CD8-positive, alpha-beta T cell (primary cell): ENCODE measurements at regions of chr5 and their contacts with region 1.

Region 1: DNA sequence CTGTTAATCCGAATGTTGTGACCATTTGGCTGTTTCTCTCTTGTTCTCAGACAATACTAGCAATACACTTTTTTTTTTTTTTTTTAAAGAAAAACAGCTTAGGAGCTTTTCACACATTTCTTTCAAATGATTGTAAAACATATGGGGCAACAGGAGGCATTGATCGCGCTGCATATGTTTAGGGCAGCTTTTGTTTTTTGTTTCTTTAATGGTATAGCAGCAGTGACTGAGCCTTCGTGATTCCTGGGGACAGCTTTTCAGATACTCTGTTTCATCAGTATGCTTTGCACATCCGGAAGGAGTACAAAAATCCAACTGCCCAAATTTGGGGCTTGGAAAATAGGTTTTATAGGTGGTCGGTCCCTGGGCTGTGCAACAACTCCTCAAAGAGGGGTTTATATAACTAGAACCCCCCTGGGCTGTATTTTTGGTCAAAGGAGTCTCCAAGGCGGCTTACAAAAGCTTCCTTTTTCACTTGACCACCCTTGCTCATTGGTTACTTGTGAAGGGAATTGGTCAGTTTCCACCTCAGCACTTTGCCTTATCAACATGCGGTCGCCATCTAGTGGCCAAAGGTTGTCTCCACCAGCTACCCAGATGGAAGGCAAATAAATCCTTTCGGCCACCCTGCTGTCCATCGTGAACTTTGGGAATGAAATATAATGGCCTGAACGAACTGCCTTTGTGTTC is 91.8 kb downstream of the PDE6A start:
- DNase-seq: peak in 7 of 9 experiments; percentile 13 to 57 (median 46)
- ATAC-seq: no peak
- H3K4me3 ChIP-seq: no peak overlapping the region
- H3K4me3 Mint-ChIP-seq: no peak overlapping the region
- H3K27ac ChIP-seq: no peak overlapping the region
- H3K27ac Mint-ChIP-seq: no peak overlapping the region
- H3K4me1 ChIP-seq: no peaks in the 10 kb centered on the region
- H3K4me1 Mint-ChIP-seq: no peaks in the 10 kb centered on the region
- H3K27me3 ChIP-seq: no peaks in the 10 kb centered on the region
- H3K27me3 Mint-ChIP-seq: no peaks in the 10 kb centered on the region
- CTCF ChIP-seq: peak; percentile 61

Region 2: DNA sequence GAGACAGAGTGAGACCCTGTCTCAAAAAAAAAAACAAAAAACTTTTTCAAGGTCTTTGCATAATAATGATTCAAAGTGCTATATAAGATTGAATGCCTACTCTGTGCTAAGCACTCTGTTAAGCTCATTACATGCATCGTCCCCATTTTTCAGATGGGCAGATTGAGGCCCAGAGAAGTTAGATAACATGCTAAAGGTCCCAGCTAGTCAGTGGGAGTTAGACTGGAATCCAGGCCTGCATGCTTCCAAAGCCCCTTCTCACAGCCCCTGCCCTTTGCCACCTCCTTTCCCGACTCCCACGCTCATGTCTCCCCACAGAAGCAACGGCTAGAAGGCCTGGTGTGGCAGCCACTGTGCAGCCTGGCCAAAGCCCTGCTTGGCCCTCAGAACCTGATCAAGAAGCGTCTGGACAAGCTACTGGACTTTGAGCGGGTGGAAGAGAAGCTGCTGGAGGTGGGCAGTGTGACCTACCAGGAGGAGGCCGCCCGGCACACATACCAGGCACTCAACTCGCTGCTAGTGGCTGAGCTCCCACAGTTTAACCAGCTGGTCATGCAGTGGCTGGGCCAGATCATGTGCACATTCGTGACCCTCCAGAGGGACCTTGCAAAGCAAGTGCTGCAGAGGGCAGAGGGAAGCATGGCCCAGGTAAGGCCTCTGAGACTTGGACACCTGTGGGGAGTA is 231.2 kb before region 1 on chr5:
- CTCF ChIA-PET with region 1: interaction called, 12 read pairs
- POLR2A ChIA-PET with region 1: no interaction called
- intact Hi-C with region 1: no loop called
- DNase-seq: no peak
- ATAC-seq: no peak
- H3K4me3 ChIP-seq: no peak overlapping the region
- H3K4me3 Mint-ChIP-seq: no peak overlapping the region
- H3K27ac ChIP-seq: no peak overlapping the region
- H3K27ac Mint-ChIP-seq: no peak overlapping the region
- H3K4me1 ChIP-seq: no peaks in the 10 kb centered on the region
- H3K4me1 Mint-ChIP-seq: no peaks in the 10 kb centered on the region
- H3K27me3 ChIP-seq: no peaks in the 10 kb centered on the region
- H3K27me3 Mint-ChIP-seq: no peaks in the 10 kb centered on the region
- CTCF ChIP-seq: no peak

Region 3: GRCh38 chr5:149636851-149637246 is 215.9 kb before region 1 on chr5:
- CTCF ChIA-PET with region 1: interaction called, 28 read pairs
- POLR2A ChIA-PET with region 1: no interaction called
- intact Hi-C with region 1: loop called (anchors 1 kb)
- DNase-seq: peak in 5 of 9 experiments; percentile 52 to 79 (median 75)
- ATAC-seq: peak; percentile 67
- H3K4me3 ChIP-seq: no peak overlapping the region
- H3K4me3 Mint-ChIP-seq: no peak overlapping the region
- H3K27ac ChIP-seq: no peak overlapping the region
- H3K27ac Mint-ChIP-seq: no peak overlapping the region
- H3K4me1 ChIP-seq: no peaks in the 10 kb centered on the region
- H3K4me1 Mint-ChIP-seq: no peaks in the 10 kb centered on the region
- H3K27me3 ChIP-seq: no peaks in the 10 kb centered on the region
- H3K27me3 Mint-ChIP-seq: no peaks in the 10 kb centered on the region
- CTCF ChIP-seq: peak; percentile 86

Region 4: DNA sequence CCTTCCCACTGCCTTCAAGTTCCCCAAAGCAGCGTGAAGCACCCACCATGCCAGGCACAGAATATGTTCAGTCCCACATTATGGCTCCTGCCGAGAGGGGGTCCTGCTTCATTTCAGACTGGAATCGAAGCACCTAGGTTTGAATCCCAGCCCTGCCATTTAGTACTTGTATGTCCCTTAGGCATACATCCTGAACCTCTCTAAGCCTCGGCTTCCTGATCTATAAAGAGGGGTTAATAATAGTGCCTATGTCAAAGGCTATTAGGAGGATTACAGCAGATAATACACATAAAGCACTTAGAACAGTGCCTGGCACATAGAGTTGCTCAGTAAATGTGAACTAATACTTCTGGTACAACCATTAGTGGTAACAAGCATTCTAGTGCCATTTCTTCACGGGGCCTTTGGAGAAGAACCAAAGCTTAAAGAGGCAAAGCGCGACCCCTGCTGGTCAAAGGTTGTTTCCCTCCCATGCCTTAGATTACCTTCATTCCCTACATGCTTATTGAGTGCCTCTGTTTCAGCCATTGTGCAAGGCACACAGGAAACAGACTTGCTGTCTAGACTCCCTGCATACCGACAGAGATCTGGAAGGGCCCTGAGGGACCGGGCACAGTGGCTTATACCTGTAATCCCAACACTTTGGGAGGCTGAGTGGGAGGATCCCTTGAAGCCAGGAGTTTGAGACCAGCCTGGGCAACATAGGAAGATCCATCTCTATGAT is 24.5 kb before region 1 on chr5:
- CTCF ChIA-PET with region 1: interaction called, 37 read pairs
- POLR2A ChIA-PET with region 1: interaction called, 3 read pairs
- intact Hi-C with region 1: no loop called
- DNase-seq: peak; percentile 65 to 90 (median 80)
- ATAC-seq: peak; percentile 79
- H3K4me3 ChIP-seq: no peak overlapping the region
- H3K4me3 Mint-ChIP-seq: no peak overlapping the region
- H3K27ac ChIP-seq: no peak overlapping the region
- H3K27ac Mint-ChIP-seq: no peak overlapping the region
- H3K4me1 ChIP-seq: no peaks in the 10 kb centered on the region
- H3K4me1 Mint-ChIP-seq: peaks cover 2% of the 10 kb centered on the region
- H3K27me3 ChIP-seq: no peaks in the 10 kb centered on the region
- H3K27me3 Mint-ChIP-seq: no peaks in the 10 kb centered on the region
- CTCF ChIP-seq: peak; percentile 84

Region 5: DNA sequence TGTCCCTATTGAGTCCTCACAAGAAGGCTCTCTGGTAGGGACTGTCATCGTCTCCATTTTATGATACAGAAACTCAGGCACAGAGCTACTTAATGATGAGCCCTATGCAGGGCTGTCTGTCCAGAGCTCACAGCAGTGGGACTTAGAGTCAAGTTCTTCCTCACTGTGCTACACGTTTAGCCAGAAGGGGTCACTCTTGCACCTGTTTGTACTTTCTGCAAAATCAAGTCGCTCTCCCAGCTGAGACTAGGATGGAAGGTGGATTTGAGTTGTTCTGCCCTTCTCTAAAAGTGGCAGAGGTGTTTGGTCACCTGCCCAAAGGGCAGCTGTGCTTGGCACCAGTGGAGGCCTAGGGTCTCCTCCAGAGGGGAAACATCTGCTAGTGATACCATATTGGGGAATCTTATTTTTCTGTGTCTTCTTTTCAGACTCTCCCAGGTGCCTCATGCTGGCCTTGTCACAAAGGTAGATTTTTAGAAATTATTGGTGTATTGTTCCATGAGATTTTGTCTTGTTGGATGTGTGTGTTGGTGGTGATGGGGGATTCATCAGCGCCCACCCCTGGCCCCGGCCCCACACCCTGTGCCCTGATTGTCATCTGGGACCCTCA is 18.4 kb before region 1 on chr5:
- CTCF ChIA-PET with region 1: interaction called, 37 read pairs
- POLR2A ChIA-PET with region 1: interaction called, 3 read pairs
- intact Hi-C with region 1: no loop called
- DNase-seq: peak in 8 of 9 experiments; percentile 20 to 75 (median 45)
- ATAC-seq: peak; percentile 62
- H3K4me3 ChIP-seq: no peak overlapping the region
- H3K4me3 Mint-ChIP-seq: no peak overlapping the region
- H3K27ac ChIP-seq: no peak overlapping the region
- H3K27ac Mint-ChIP-seq: no peak overlapping the region
- H3K4me1 ChIP-seq: no peaks in the 10 kb centered on the region
- H3K4me1 Mint-ChIP-seq: no peaks in the 10 kb centered on the region
- H3K27me3 ChIP-seq: no peaks in the 10 kb centered on the region
- H3K27me3 Mint-ChIP-seq: no peaks in the 10 kb centered on the region
- CTCF ChIP-seq: peak; percentile 52

Region 6: GRCh38 chr5:149841851-149842793 is 10.7 kb before region 1 on chr5:
- CTCF ChIA-PET with region 1: interaction called, 13 read pairs
- POLR2A ChIA-PET with region 1: no interaction called
- intact Hi-C with region 1: no loop called
- DNase-seq: no peak
- ATAC-seq: no peak
- H3K4me3 ChIP-seq: no peak overlapping the region
- H3K4me3 Mint-ChIP-seq: no peak overlapping the region
- H3K27ac ChIP-seq: no peak overlapping the region
- H3K27ac Mint-ChIP-seq: no peak overlapping the region
- H3K4me1 ChIP-seq: no peaks in the 10 kb centered on the region
- H3K4me1 Mint-ChIP-seq: no peaks in the 10 kb centered on the region
- H3K27me3 ChIP-seq: no peaks in the 10 kb centered on the region
- H3K27me3 Mint-ChIP-seq: no peaks in the 10 kb centered on the region
- CTCF ChIP-seq: no peak

Region 7: GRCh38 chr5:149869411-149869821 is 16.6 kb after region 1 on chr5:
- CTCF ChIA-PET with region 1: interaction called, 22 read pairs
- POLR2A ChIA-PET with region 1: no interaction called
- intact Hi-C with region 1: no loop called
- DNase-seq: no peak
- ATAC-seq: no peak
- H3K4me3 ChIP-seq: no peak overlapping the region
- H3K4me3 Mint-ChIP-seq: no peak overlapping the region
- H3K27ac ChIP-seq: no peak overlapping the region
- H3K27ac Mint-ChIP-seq: no peak overlapping the region
- H3K4me1 ChIP-seq: no peaks in the 10 kb centered on the region
- H3K4me1 Mint-ChIP-seq: no peaks in the 10 kb centered on the region
- H3K27me3 ChIP-seq: no peaks in the 10 kb centered on the region
- H3K27me3 Mint-ChIP-seq: no peaks in the 10 kb centered on the region
- CTCF ChIP-seq: no peak